Activated naive CD4-positive, alpha-beta T cell treated with anti-CD3 and anti-CD28 coated beads for 36 hours (primary cell): ENCODE measurements at regions of chr1 and their contacts with region 1.

Region 1: GRCh38 chr1:67766141-67766978 is 66.9 kb downstream of the GNG12 start:
- DNase-seq: peak; percentile 63
- H3K4me3 Mint-ChIP-seq: no peak overlapping the region
- H3K27ac Mint-ChIP-seq: no peak overlapping the region
- H3K4me1 Mint-ChIP-seq: peaks cover 11% of the 10 kb centered on the region
- H3K27me3 Mint-ChIP-seq: peaks cover 18% of the 10 kb centered on the region

Region 2: GRCh38 chr1:67561704-67562113 is 204.7 kb before region 1 on chr1:
- CTCF ChIA-PET with region 1: interaction called, 164 read pairs
- intact Hi-C with region 1: no loop called
- DNase-seq: peak; percentile 96
- H3K4me3 Mint-ChIP-seq: no peak overlapping the region
- H3K27ac Mint-ChIP-seq: no peak overlapping the region
- H3K4me1 Mint-ChIP-seq: no peaks in the 10 kb centered on the region
- H3K27me3 Mint-ChIP-seq: no peaks in the 10 kb centered on the region

Region 3: DNA sequence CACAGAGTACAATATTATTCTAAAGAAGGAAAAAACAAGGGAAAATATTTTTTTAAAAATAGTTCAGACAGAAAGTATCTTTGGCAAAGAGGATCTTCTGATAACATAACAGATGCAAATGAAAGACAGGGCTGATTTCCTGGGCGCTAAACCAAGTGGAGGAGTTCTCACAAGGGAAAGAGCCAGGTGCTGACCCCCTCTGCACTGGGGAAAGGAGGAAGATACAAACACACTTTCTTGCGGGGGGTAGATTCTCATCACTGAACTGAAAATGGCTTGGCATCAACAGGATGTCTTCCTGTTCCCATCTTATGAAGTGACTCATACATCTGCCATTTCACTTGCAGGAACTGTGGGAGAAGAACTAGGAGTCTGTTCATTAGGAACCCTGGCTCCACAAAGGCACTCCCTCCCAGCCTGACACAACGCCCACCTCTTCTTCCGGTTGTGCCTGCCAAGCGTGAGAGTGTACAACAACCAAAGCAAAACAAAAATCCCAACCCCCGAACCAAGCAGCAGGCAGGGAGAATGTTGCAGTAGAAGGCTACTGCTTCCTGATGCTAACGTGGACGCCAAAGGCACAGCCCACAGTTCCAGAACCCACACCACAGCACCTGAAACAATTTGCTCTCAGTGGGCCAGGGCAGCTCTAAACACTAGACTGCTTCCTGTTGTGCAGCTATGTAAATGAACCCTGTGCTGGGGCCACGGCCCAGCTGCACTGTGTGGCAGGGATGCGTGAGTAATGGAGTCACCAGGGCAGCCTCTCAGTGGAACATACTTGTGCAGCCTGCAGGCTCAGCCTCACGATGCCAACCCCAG is 30.3 kb before region 1 on chr1:
- CTCF ChIA-PET with region 1: interaction called, 11 read pairs
- intact Hi-C with region 1: no loop called
- DNase-seq: peak; percentile 73
- H3K4me3 Mint-ChIP-seq: peak overlapping the region; percentile 53
- H3K27ac Mint-ChIP-seq: peak overlapping the region; percentile 74
- H3K4me1 Mint-ChIP-seq: peaks cover 16% of the 10 kb centered on the region
- H3K27me3 Mint-ChIP-seq: peaks cover 4% of the 10 kb centered on the region

Region 4: GRCh38 chr1:67832737-67833601 is 66.6 kb after region 1 on chr1 and contains the start of gene GNG12:
- CTCF ChIA-PET with region 1: interaction called, 8 read pairs
- intact Hi-C with region 1: loop called (anchors 5 kb)
- DNase-seq: peak; percentile 13
- H3K4me3 Mint-ChIP-seq: peak within 1 kb of the TSS; percentile 67
- H3K27ac Mint-ChIP-seq: no peak within 1 kb of the TSS
- H3K4me1 Mint-ChIP-seq: peaks cover 12% of the 10 kb centered on the region
- H3K27me3 Mint-ChIP-seq: peaks cover 49% of the 10 kb centered on the region
- total RNA-seq, gene GNG12: 0.05 to 0.07 TPM

Region 5: GRCh38 chr1:67908250-67908936 is 142.0 kb after region 1 on chr1:
- CTCF ChIA-PET with region 1: no interaction called
- intact Hi-C with region 1: no loop called
- DNase-seq: no peak
- H3K4me3 Mint-ChIP-seq: no peak overlapping the region
- H3K27ac Mint-ChIP-seq: no peak overlapping the region
- H3K4me1 Mint-ChIP-seq: no peaks in the 10 kb centered on the region
- H3K27me3 Mint-ChIP-seq: peaks cover 17% of the 10 kb centered on the region

Region 6: DNA sequence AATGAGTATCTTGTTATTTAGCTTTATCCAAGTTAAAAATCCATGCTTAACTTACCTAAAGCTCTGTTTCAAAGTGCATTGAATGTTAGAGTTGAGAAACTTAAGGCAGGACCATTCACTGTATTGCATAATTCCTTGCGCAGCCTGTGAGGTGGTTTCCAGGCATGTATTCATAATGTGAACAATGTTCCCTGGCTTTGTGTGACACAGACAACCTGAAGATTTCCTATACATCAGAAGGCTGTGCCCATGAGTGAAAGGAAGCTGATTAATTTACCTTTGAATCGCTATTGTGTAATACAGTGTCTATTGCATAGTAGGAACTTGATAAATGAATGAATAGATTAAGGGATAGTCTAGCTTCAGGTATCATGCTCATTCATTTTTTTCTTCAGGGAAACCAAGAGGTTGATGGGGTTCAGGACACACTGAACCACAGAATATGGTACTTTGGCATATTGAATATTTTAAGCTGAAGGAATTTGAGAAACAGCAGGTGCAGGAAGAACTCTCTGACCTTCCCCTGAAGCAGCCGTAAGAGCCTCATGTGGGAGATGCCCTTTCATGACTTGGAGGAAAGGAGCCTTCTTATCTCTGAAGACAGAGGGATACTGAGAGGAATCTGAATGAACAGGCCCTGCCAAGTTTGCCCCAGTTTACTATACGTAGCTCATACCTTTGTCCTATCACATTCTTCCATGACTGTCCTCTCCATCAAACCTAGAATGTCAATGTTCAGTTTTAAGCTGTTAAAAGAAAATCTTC is 155.5 kb after region 1 on chr1:
- CTCF ChIA-PET with region 1: no interaction called
- intact Hi-C with region 1: no loop called
- DNase-seq: no peak
- H3K4me3 Mint-ChIP-seq: no peak overlapping the region
- H3K27ac Mint-ChIP-seq: no peak overlapping the region
- H3K4me1 Mint-ChIP-seq: no peaks in the 10 kb centered on the region
- H3K27me3 Mint-ChIP-seq: no peaks in the 10 kb centered on the region

Region 7: GRCh38 chr1:67970088-67970487 is 203.7 kb after region 1 on chr1:
- CTCF ChIA-PET with region 1: no interaction called
- intact Hi-C with region 1: no loop called
- DNase-seq: no peak
- H3K4me3 Mint-ChIP-seq: no peak overlapping the region
- H3K27ac Mint-ChIP-seq: no peak overlapping the region
- H3K4me1 Mint-ChIP-seq: no peaks in the 10 kb centered on the region
- H3K27me3 Mint-ChIP-seq: no peaks in the 10 kb centered on the region

Region 8: DNA sequence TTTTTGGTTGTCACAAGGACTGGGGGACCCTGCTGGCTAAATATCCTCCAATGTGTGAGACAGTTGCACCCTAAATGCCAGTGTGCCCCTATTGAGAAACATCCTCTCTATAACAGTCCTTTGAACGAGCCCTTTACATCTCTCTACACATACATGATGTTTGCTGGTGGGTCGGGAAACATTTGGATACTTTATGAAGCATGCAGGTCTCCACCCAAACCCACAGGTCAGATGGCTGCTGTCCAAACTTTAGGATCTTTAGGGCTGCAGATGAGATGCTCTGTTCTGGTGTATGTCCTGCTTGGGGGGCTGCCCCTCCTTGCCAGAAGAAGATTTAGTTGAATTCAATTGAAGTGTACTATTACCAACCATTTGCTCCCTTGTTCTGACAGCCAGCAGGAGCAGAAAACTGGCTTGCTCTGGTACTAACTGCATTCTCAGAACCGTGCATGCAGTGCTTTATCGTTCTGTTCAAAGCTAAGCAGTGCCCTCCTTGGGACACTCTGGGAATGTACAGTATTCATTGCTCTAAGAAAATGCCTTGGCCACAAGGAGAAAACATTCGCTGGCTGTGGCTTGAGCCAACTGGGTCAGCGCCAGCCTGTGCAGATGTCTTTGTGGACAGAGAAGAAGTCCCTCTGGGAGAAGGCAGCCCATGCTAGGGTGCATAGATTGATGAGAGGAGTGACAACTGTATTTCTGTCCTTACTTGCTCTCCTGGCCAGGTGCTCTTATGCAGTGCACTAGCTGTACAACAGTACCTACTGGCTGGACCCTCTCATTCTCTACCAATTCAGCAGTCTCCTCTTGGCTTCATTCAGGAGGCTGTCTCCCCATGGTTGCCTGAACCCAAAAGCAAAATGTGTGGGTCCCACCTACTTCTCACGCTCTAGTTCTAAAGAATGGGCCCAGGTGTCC is 345.4 kb after region 1 on chr1:
- CTCF ChIA-PET with region 1: interaction called, 15 read pairs
- intact Hi-C with region 1: loop called (anchors 1 kb)
- DNase-seq: peak; percentile 11
- H3K4me3 Mint-ChIP-seq: no peak overlapping the region
- H3K27ac Mint-ChIP-seq: no peak overlapping the region
- H3K4me1 Mint-ChIP-seq: peaks cover 1% of the 10 kb centered on the region
- H3K27me3 Mint-ChIP-seq: peaks cover 2% of the 10 kb centered on the region

Region 9: DNA sequence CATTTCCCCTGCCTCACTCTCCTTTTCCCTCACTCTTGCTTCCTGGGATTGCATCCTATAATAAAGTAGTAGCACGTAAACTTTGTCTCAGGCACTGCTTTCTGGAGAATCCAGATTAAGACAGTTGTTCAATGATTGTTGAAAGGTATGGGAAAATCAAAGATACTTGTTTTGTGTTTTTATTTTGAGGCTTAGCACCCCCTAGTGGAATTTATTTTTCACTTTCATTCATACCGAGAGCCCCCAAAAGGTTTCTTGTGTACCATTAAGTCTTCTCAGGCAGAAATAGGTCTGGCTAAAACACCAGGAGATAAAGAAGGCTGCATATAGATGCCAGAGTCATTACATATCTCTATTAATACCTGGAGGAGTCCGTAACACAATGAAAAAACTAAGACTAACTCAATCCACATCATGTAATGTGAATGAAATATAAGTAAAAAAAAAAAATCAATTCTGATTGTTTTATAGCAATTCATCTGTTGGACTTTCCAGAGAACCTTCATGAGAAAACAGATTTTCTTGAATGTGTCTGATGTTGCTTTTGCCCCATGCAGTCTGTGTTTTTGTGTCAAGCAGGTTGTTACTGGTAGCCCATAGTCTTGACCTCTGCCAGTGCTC is 579.9 kb after region 1 on chr1:
- CTCF ChIA-PET with region 1: no interaction called
- intact Hi-C with region 1: loop called (anchors 5 kb)
- DNase-seq: no peak
- H3K4me3 Mint-ChIP-seq: no peak overlapping the region
- H3K27ac Mint-ChIP-seq: no peak overlapping the region
- H3K4me1 Mint-ChIP-seq: no peaks in the 10 kb centered on the region
- H3K27me3 Mint-ChIP-seq: no peaks in the 10 kb centered on the region